T-cell (primary cell): ENCODE measurements at regions of chr22 and their contacts with region 1.

Region 1: GRCh38 chr22:40516416-40516815 is 120.1 kb downstream of the MRTFA start:
- DNase-seq: no peak
- ATAC-seq: no peak
- H3K4me3 ChIP-seq: no peak overlapping the region
- H3K4me3 Mint-ChIP-seq: no peak overlapping the region
- H3K27ac ChIP-seq: no peak overlapping the region
- H3K27ac Mint-ChIP-seq: no peak overlapping the region
- H3K4me1 ChIP-seq: peaks cover 2 to 16% of the 10 kb centered on the region in 2 experiments
- H3K4me1 Mint-ChIP-seq: peaks cover 26 to 37% (median 32%) of the 10 kb centered on the region in 3 donors
- H3K27me3 ChIP-seq: no peaks in the 10 kb centered on the region
- H3K27me3 Mint-ChIP-seq: no peaks in the 10 kb centered on the region

Region 2: DNA sequence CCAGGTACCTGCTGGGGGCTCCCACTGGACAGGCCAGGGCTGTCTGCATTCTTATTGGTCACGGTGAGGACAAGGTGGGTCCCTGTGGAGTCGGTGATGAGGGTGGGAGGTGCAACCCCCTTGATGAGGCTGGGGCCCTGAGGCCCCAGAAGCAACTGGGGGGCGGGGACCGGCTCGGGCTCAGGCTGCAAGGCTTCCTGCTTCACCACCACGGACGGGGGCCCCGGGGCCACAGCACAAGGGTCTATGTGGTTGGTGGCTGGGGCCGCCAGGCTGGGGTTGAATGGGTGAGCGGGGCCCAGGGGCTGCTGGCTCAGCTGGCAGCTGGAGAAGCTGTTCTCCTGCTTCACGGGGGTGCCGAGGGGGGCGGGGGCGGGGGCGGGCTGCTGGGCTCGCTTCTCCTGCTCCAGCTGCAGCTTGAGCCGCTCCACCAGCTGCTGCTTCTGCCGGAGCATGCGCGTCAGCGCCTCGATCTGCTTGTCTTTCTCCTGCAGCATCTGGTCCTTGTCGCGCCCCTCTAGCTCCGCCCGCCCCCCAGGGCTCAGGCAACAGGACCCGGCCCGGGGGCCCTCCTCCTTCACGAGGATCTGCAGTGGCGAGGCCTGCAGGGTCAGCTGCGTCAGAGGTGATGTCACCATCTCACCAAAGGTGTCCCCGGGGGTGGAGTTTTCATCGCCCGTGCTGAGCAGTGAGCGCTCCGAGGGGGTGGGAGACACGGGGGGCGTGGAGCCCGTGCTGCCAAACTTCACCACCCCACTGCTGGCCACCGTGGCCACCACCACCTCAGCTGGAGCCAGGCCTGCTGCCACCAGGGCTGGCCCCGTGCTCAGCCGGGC is 97.8 kb before region 1 on chr22:
- CTCF ChIA-PET with region 1: no interaction called
- POLR2A ChIA-PET with region 1: no interaction called
- DNase-seq: peak in 25 of 35 experiments; percentile 6 to 60 (median 29)
- ATAC-seq: peak in 1 of 4 experiments; percentile 81
- H3K4me3 ChIP-seq: no peak overlapping the region
- H3K4me3 Mint-ChIP-seq: no peak overlapping the region
- H3K27ac ChIP-seq: no peak overlapping the region
- H3K27ac Mint-ChIP-seq: peak overlapping the region in 1 of 2 donors; percentile 58
- H3K4me1 ChIP-seq: peaks cover 2 to 53% of the 10 kb centered on the region in 2 experiments
- H3K4me1 Mint-ChIP-seq: peaks cover 24 to 48% (median 35%) of the 10 kb centered on the region in 3 donors
- H3K27me3 ChIP-seq: no peaks in the 10 kb centered on the region
- H3K27me3 Mint-ChIP-seq: no peaks in the 10 kb centered on the region

Region 3: DNA sequence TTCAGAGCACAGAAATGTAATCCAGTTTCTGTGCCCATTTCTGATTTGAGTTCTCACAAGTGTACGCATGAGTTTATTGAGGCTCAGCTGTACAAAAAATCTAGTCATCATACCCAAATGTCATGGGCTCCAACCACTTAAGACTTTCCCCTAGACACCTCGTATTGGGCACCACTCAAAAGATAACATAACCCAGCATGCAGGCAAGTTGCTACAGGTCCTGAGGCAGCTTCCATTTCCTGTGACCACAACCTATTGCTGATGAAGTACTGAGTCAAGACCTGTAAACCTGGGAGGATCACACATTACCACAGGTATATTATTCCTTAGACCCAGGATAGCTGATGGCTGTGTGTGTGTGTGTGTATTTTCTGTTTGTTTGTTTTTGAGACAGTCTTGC is 24.9 kb after region 1 on chr22:
- CTCF ChIA-PET with region 1: no interaction called
- POLR2A ChIA-PET with region 1: interaction called in 1 of 2 experiments, 14 read pairs
- DNase-seq: no peak
- ATAC-seq: peak in 1 of 4 experiments; percentile 46
- H3K4me3 ChIP-seq: no peak overlapping the region
- H3K4me3 Mint-ChIP-seq: no peak overlapping the region
- H3K27ac ChIP-seq: no peak overlapping the region
- H3K27ac Mint-ChIP-seq: peak overlapping the region in 1 of 2 donors; percentile 17
- H3K4me1 ChIP-seq: no peaks in the 10 kb centered on the region
- H3K4me1 Mint-ChIP-seq: peaks cover 32 to 43% (median 36%) of the 10 kb centered on the region in 3 donors
- H3K27me3 ChIP-seq: no peaks in the 10 kb centered on the region
- H3K27me3 Mint-ChIP-seq: no peaks in the 10 kb centered on the region